ENCODE measurements at regions of chr3 and their contacts with region 1.

Region 1: DNA sequence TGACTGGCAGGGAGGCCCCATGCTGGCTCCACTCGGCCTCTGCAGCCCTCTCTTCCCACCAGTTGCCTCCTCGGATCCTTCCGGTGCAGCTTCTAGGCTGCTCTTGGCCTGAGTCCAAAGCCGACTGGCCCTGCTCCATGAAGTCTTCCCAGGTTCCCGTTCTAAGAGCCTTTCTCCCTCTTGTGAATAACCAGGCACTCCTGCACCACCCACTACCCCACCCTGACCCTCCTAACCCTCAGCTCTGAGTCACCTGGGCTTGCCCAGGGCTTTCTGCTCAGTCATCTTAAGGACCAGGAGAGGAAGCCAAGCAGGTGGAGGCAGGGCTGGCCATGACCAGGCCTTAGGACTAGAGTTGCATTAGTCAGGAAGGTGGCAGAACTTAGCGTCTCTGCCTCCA is 28.1 kb upstream of the CNBP start:
- DNase-seq: peak; percentile 98
- H3K4me3 ChIP-seq: no peak overlapping the region
- H3K27ac ChIP-seq: peak overlapping the region; percentile 75
- H3K4me1 ChIP-seq: peaks cover 21% of the 10 kb centered on the region
- H3K27me3 ChIP-seq: no peaks in the 10 kb centered on the region
- CTCF ChIP-seq: no peak

Region 2: DNA sequence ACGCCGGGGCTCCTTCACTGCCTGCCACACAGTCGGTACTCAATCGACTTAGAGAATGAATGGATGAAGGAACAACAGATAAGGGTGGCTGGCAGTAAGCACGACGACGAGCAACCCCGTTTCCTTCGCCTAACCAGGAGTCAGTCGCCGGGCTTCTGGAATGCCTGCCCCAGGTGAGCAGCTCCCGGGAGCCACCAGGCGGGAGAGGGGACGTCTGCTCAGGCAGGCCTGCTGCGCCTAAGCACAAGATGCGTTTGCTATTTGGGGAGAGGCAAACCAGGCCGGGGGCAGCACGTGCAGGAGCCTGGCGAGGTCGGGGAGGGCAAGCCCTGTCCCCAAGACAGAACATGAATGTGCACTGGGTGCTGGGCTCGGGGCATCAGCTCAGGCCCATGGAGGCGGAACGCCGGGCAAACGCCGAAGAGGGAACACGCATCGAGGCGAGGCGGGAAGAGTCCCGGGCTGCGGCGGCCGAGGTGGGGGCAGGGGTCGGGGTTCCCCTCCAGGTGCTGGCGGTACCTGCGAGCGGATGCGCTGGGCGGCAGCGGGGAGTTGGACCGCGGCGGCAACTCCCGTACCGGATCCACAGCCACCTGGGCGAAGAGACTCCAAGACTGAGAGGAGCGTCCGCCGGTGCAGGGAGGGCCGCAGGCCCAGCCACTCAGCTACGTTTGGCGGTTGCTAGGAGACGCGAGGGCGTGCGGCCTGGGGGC is 218.2 kb before region 1 on chr3 and contains the start of gene CFAP92:
- CTCF ChIA-PET with region 1: no interaction called
- POLR2A ChIA-PET with region 1: no interaction called
- intact Hi-C with region 1: no loop called
- DNase-seq: peak; percentile 65 to 94
- H3K4me3 ChIP-seq: peak within 1 kb of the TSS; percentile 49; the same call in 1 of the 2 replicates
- H3K27ac ChIP-seq: no peak within 1 kb of the TSS
- H3K4me1 ChIP-seq: 0 out of 2 replicates have a peak, but pooled peaks cover 7% of the 10 kb centered on the region
- H3K27me3 ChIP-seq: peaks cover 25% of the 10 kb centered on the region; the same call in 1 of the 2 replicates
- CTCF ChIP-seq: no peak
- total RNA-seq, gene CFAP92: 4.3 and 4.8 TPM in 2 replicates

Region 3: DNA sequence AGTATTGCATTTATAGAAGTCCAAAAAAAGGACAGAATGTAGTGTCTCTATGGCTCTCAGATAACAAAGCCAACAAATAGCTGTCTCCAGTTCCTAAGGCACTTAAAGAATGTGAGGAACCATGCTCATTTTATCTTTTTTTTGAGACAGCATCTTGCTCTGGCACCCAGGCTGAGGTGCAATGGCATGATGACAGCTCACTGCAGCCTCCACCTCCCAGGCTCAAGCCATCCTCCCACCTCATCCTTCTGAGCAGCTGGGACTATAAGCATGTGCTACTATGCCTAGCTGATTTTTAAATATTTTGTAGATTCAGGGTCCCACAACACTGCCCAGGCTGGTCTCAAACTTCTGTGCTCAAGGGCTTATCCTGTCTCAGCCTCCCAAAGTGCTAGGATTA is 67.0 kb before region 1 on chr3:
- CTCF ChIA-PET with region 1: no interaction called
- POLR2A ChIA-PET with region 1: interaction called, 13 read pairs
- intact Hi-C with region 1: no loop called
- DNase-seq: no peak
- H3K4me3 ChIP-seq: no peak overlapping the region
- H3K27ac ChIP-seq: no peak overlapping the region
- H3K4me1 ChIP-seq: no peaks in the 10 kb centered on the region
- H3K27me3 ChIP-seq: no peaks in the 10 kb centered on the region
- CTCF ChIP-seq: no peak

Region 4: GRCh38 chr3:129183569-129184395 is 28.0 kb before region 1 on chr3 and contains the start of gene CNBP:
- CTCF ChIA-PET with region 1: no interaction called
- POLR2A ChIA-PET with region 1: interaction called, 4 read pairs
- intact Hi-C with region 1: loop called (anchors 1 kb)
- DNase-seq: peak; percentile 84 to 94
- H3K4me3 ChIP-seq: peak within 1 kb of the TSS; percentile 73
- H3K27ac ChIP-seq: peak within 1 kb of the TSS; percentile 79
- H3K4me1 ChIP-seq: peaks cover 45% of the 10 kb centered on the region
- H3K27me3 ChIP-seq: no peaks in the 10 kb centered on the region
- CTCF ChIP-seq: no peak
- total RNA-seq, gene CNBP: 261 and 265 TPM in 2 replicates

Region 5: DNA sequence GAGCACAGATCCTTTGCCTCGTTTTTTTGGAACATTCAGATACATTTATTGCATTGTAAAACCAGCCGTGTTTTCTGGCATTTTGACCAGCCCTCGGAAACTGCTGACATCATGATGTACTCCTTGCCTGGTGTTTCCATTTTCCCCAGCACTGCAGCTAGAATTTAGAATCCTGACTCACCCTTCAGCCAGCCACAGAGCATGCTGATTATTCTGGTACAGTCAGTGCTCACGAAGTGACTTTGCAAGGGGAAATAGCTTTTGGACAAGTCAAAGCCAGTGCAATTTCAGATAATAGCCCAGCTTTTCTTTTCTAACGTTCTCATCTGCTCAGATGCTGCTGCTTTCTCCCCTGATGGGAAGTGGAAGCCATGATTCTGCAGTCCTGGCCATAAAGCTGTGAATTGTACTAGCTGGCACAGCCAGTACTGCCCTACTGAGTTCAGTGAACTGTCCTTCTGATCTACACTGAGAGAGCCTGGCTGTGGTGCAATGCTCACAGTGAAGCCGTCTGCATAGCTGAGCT is 16.0 kb before region 1 on chr3:
- CTCF ChIA-PET with region 1: no interaction called
- POLR2A ChIA-PET with region 1: interaction called, 6 read pairs
- intact Hi-C with region 1: loop called (anchors 2 kb)
- DNase-seq: peak; percentile 57 to 84
- H3K4me3 ChIP-seq: peak overlapping the region; percentile 10; the same call in 1 of the 2 replicates
- H3K27ac ChIP-seq: peak overlapping the region; percentile 71
- H3K4me1 ChIP-seq: peaks cover 32% of the 10 kb centered on the region
- H3K27me3 ChIP-seq: no peaks in the 10 kb centered on the region
- CTCF ChIP-seq: no peak

Region 6: GRCh38 chr3:129224984-129225393 is 13.2 kb after region 1 on chr3:
- CTCF ChIA-PET with region 1: interaction called, 10 read pairs
- POLR2A ChIA-PET with region 1: interaction called, 16 read pairs
- intact Hi-C with region 1: loop called (anchors 1 kb)
- DNase-seq: peak; percentile 74 to 88
- H3K4me3 ChIP-seq: peak overlapping the region; percentile 31
- H3K27ac ChIP-seq: peak overlapping the region; percentile 88
- H3K4me1 ChIP-seq: peaks cover 52% of the 10 kb centered on the region
- H3K27me3 ChIP-seq: no peaks in the 10 kb centered on the region
- CTCF ChIP-seq: no peak

Region 7: GRCh38 chr3:129233538-129233937 is 21.8 kb after region 1 on chr3:
- CTCF ChIA-PET with region 1: interaction called, 4 read pairs
- POLR2A ChIA-PET with region 1: interaction called, 16 read pairs
- intact Hi-C with region 1: no loop called
- DNase-seq: no peak
- H3K4me3 ChIP-seq: no peak overlapping the region
- H3K27ac ChIP-seq: no peak overlapping the region
- H3K4me1 ChIP-seq: peaks cover 41% of the 10 kb centered on the region
- H3K27me3 ChIP-seq: no peaks in the 10 kb centered on the region
- CTCF ChIP-seq: no peak

Region 8: DNA sequence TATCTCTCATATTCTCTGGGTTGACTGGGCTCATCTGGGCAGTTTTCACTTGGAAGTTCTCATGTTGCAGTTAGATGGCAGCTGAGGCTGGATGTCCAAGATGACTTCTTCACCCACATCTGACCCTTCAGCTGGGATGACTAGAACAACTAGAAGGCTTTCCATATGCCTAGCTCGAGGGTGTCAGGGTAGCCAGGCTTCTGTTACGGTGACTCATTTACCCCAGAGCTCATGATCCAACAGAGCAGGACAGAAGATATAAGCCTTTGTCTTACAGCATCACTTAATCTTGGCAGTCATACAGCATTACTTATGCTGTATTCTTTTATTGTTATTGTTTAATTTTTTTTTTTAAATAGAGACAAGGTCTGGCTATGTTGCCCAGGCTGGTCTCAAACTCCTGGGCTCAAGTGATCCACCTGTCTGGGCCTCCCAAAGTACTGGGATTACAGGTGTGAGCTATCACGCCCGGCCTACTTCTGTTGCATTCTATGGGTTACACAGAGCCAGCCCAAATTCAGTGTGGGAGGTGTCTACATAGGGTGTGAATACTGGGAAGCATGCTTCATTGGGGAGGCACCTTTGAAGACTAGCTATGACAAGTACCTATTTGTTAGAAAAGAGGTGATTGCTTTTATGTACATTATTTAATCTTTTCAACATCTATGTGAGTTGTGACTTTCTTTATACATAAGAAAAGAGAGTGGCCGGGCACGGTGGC is 77.6 kb after region 1 on chr3:
- CTCF ChIA-PET with region 1: no interaction called
- POLR2A ChIA-PET with region 1: no interaction called
- intact Hi-C with region 1: no loop called
- DNase-seq: no peak
- H3K4me3 ChIP-seq: no peak overlapping the region
- H3K27ac ChIP-seq: no peak overlapping the region
- H3K4me1 ChIP-seq: no peaks in the 10 kb centered on the region
- H3K27me3 ChIP-seq: no peaks in the 10 kb centered on the region
- CTCF ChIP-seq: no peak

Region 9: GRCh38 chr3:129409541-129409940 is 197.8 kb after region 1 on chr3:
- CTCF ChIA-PET with region 1: no interaction called
- POLR2A ChIA-PET with region 1: no interaction called
- intact Hi-C with region 1: no loop called
- DNase-seq: no peak
- H3K4me3 ChIP-seq: no peak overlapping the region
- H3K27ac ChIP-seq: no peak overlapping the region
- H3K4me1 ChIP-seq: peaks cover 24% of the 10 kb centered on the region
- H3K27me3 ChIP-seq: no peaks in the 10 kb centered on the region
- CTCF ChIP-seq: no peak

Measured in PC-9 (cell line).